CD14-positive monocyte (primary cell): ENCODE measurements at regions of chr1 and their contacts with region 1.

Region 1: GRCh38 chr1:53278201-53278725 is 39.9 kb upstream of the MAGOH start:
- DNase-seq: peak; percentile 21 to 48 (median 37)
- H3K4me3 ChIP-seq: no peak overlapping the region
- H3K4me3 Mint-ChIP-seq: no peak overlapping the region
- H3K27ac ChIP-seq: peak overlapping the region in 1 of 2 donors; percentile 45
- H3K27ac Mint-ChIP-seq: peak overlapping the region in 2 of 7 donors; percentile 18 to 64
- H3K4me1 ChIP-seq: no peaks in the 10 kb centered on the region
- H3K4me1 Mint-ChIP-seq: peaks cover 7% of the 10 kb centered on the region
- H3K27me3 ChIP-seq: no peaks in the 10 kb centered on the region
- H3K27me3 Mint-ChIP-seq: no peaks in the 10 kb centered on the region
- CTCF ChIP-seq: peak; percentile 93

Region 2: DNA sequence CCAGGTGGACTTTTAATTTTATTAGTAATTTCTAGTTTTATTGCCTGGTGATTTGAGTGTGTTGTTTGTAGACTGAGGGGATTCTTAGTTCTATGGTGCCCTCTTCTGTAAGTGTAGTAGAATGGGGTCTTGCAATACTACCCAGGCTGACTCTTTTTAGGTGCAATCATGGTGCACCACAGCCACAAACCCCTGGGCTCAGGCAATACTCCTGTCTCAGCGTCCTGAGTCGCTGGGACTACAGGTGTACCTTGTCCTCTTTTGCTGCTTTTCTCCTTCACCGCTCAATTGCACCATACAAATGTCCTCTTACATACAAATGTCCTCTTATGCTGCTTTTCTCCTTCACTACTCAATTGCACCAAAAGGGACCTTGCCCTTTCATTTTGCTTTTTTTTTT is 308.1 kb before region 1 on chr1:
- intact Hi-C with region 1: no loop called
- DNase-seq: no peak
- H3K4me3 ChIP-seq: no peak overlapping the region
- H3K4me3 Mint-ChIP-seq: no peak overlapping the region
- H3K27ac ChIP-seq: no peak overlapping the region
- H3K27ac Mint-ChIP-seq: peak overlapping the region in 1 of 7 donors; percentile 4
- H3K4me1 ChIP-seq: no peaks in the 10 kb centered on the region
- H3K4me1 Mint-ChIP-seq: no peaks in the 10 kb centered on the region
- H3K27me3 ChIP-seq: no peaks in the 10 kb centered on the region
- H3K27me3 Mint-ChIP-seq: no peaks in the 10 kb centered on the region
- CTCF ChIP-seq: no peak

Region 3: GRCh38 chr1:53266106-53266505 is 12.2 kb before region 1 on chr1:
- intact Hi-C with region 1: no loop called
- DNase-seq: no peak
- H3K4me3 ChIP-seq: no peak overlapping the region
- H3K4me3 Mint-ChIP-seq: no peak overlapping the region
- H3K27ac ChIP-seq: no peak overlapping the region
- H3K27ac Mint-ChIP-seq: peak overlapping the region in 1 of 7 donors; percentile 2
- H3K4me1 ChIP-seq: no peaks in the 10 kb centered on the region
- H3K4me1 Mint-ChIP-seq: no peaks in the 10 kb centered on the region
- H3K27me3 ChIP-seq: no peaks in the 10 kb centered on the region
- H3K27me3 Mint-ChIP-seq: no peaks in the 10 kb centered on the region
- CTCF ChIP-seq: no peak

Region 4: GRCh38 chr1:53393325-53393792 is 115.1 kb after region 1 on chr1:
- intact Hi-C with region 1: loop called (anchors 1 to 2 kb)
- DNase-seq: peak; percentile 35 to 60 (median 45)
- H3K4me3 ChIP-seq: no peak overlapping the region
- H3K4me3 Mint-ChIP-seq: no peak overlapping the region
- H3K27ac ChIP-seq: no peak overlapping the region
- H3K27ac Mint-ChIP-seq: no peak overlapping the region
- H3K4me1 ChIP-seq: peaks cover 14 to 17% of the 10 kb centered on the region in 2 donors
- H3K4me1 Mint-ChIP-seq: peaks cover 20% of the 10 kb centered on the region
- H3K27me3 ChIP-seq: no peaks in the 10 kb centered on the region
- H3K27me3 Mint-ChIP-seq: peaks cover 3 to 10% (median 3%) of the 10 kb centered on the region in 3 donors
- CTCF ChIP-seq: peak; percentile 98